Activated T-helper 1 cell treated with anti-CD3 and anti-CD28 coated beads, Interleukin-12 subunit alpha, Interleukin-12 subunit beta, Interleukin-2, Interleukin-4 antibody, amounts not matched to agents 30 ng/mL and 10 ng/mL and 1 ng/mL, durations not matched to agents 14 hours and 24 hours and 36 hours (primary cell): ENCODE measurements at regions of chr4 and their contacts with region 1.

Region 1: GRCh38 chr4:70901984-70902576 is at the start of gene MOB1B:
- DNase-seq: peak; percentile 81
- H3K4me3 Mint-ChIP-seq: peak within 1 kb of the TSS; percentile 98
- H3K27ac Mint-ChIP-seq: peak within 1 kb of the TSS; percentile 93
- H3K4me1 Mint-ChIP-seq: peaks cover 25% of the 10 kb centered on the region
- H3K27me3 Mint-ChIP-seq: no peaks in the 10 kb centered on the region
- total RNA-seq, gene MOB1B: 22.1 and 23.1 TPM in 2 replicates

Region 2: DNA sequence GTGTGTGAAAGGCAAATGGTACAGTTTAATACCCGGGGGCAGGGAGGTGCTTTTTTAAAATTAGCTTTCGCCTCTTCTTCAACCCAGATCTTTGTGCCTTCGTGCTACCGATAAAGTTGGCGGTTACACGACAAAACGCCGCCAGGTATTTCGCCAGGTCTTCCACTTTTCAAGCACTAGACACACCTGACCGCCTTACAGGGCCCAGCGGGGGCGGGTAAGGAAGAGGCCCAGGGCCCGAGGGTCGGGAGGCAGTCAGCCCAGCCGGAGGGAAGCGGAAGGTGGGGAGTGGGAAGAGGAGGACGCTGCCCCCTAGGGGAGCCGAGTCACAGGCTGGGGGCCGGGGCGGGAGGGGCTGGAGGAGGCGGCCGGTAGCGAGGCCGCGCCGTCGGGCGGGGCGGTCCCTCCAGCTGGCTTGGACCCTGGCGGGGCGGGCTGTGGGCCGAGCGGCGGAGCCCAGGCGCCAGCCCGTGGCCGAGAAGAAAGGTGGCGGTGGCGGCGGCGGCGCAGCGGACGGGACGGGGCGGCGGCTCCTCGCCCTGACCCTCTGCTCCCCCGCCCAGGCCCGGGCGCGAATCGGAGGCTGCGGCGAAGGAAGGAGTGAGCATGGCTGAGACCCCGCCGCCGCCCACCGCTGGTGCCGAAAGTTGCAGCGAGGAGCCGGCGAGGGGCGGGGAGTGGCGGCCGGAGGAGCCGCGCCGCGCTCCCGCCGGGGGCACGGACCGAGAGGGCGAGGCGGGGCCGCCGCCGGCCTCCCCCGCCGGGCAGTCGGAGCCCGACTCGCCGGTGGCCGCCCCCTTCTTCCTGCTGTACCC is 197.5 kb before region 1 on chr4:
- intact Hi-C with region 1: loop called (anchors 1 kb)
- DNase-seq: peak; percentile 38
- H3K4me3 Mint-ChIP-seq: peak overlapping the region; percentile 76
- H3K27ac Mint-ChIP-seq: peak overlapping the region; percentile 83
- H3K4me1 Mint-ChIP-seq: peaks cover 24% of the 10 kb centered on the region
- H3K27me3 Mint-ChIP-seq: peaks cover 3% of the 10 kb centered on the region

Region 3: GRCh38 chr4:70818173-70818855 is 83.8 kb before region 1 on chr4:
- intact Hi-C with region 1: loop called (anchors 5 kb)
- DNase-seq: no peak
- H3K4me3 Mint-ChIP-seq: no peak overlapping the region
- H3K27ac Mint-ChIP-seq: no peak overlapping the region
- H3K4me1 Mint-ChIP-seq: peaks cover 8% of the 10 kb centered on the region
- H3K27me3 Mint-ChIP-seq: no peaks in the 10 kb centered on the region

Region 4: DNA sequence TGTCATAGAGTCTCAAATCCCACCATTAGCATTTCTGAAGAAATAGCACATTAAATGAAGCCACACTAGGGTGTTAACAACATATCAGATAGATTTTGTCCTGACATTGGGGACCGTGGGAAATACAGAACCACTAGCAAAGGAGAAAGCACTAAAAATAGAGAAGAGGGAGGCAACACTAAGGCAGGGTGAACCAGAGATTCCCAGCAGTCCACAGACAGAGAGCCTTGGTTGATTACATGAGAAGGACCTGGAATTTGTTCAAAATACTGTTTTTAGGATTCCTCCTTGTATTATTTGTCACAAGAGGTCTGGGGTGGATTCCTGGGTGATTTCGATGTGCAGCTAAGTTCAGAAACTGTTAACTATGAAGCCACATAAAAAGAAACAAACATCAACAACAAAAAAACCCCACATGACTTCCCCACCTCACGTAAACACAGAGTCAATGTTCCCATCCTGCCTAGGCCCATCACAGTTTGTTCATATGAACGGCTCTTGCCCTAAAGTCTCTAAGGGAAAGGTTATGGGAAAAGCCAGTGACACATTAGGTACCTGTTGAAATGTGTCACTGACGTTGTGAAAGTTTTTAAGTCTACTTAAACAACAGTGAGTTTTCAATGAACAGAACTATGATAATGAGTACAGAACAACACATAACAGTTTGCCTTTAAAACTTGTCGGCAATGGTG is 38.8 kb before region 1 on chr4:
- intact Hi-C with region 1: loop called (anchors 1 kb)
- DNase-seq: peak; percentile 21
- H3K4me3 Mint-ChIP-seq: peak overlapping the region; percentile 15
- H3K27ac Mint-ChIP-seq: peak overlapping the region; percentile 82
- H3K4me1 Mint-ChIP-seq: peaks cover 15% of the 10 kb centered on the region
- H3K27me3 Mint-ChIP-seq: peaks cover under 1% of the 10 kb centered on the region

Region 5: DNA sequence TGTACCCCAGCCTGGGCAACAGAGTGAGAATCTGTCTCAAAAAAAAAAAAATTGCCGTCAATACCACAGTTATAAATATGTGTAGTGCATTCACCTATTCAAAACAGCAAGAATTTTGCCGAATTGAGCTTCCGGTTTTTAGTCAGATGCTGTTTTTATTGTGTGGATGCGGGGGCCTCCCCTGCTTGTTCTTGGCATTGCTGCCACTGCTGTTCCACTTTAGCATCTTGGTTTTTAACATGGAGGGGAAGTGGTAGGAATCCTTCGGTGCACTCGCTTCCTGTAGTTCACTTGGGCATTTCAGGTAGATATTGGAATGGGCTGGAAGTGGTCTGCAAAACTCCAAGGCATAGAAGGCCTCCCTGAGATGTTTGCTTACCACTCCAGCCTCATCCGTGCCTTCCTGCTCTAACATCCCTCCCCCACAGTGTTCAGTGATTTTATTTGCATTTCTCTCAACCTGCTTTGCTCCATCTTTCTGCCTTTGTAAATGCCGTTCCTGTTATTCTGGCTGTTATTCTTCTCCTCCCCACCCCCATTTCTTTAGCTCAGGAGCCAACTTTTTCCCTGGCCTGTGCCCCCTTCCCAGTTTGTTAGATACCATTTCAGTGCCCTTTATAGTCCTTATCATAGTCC is 25.5 kb after region 1 on chr4:
- intact Hi-C with region 1: loop called (anchors 1 kb)
- DNase-seq: peak; percentile 15
- H3K4me3 Mint-ChIP-seq: peak overlapping the region; percentile 11
- H3K27ac Mint-ChIP-seq: peak overlapping the region; percentile 76
- H3K4me1 Mint-ChIP-seq: peaks cover 31% of the 10 kb centered on the region
- H3K27me3 Mint-ChIP-seq: no peaks in the 10 kb centered on the region

Region 6: GRCh38 chr4:70943114-70943513 is 41.0 kb after region 1 on chr4:
- intact Hi-C with region 1: no loop called
- DNase-seq: no peak
- H3K4me3 Mint-ChIP-seq: no peak overlapping the region
- H3K27ac Mint-ChIP-seq: no peak overlapping the region
- H3K4me1 Mint-ChIP-seq: peaks cover 9% of the 10 kb centered on the region
- H3K27me3 Mint-ChIP-seq: no peaks in the 10 kb centered on the region

Region 7: DNA sequence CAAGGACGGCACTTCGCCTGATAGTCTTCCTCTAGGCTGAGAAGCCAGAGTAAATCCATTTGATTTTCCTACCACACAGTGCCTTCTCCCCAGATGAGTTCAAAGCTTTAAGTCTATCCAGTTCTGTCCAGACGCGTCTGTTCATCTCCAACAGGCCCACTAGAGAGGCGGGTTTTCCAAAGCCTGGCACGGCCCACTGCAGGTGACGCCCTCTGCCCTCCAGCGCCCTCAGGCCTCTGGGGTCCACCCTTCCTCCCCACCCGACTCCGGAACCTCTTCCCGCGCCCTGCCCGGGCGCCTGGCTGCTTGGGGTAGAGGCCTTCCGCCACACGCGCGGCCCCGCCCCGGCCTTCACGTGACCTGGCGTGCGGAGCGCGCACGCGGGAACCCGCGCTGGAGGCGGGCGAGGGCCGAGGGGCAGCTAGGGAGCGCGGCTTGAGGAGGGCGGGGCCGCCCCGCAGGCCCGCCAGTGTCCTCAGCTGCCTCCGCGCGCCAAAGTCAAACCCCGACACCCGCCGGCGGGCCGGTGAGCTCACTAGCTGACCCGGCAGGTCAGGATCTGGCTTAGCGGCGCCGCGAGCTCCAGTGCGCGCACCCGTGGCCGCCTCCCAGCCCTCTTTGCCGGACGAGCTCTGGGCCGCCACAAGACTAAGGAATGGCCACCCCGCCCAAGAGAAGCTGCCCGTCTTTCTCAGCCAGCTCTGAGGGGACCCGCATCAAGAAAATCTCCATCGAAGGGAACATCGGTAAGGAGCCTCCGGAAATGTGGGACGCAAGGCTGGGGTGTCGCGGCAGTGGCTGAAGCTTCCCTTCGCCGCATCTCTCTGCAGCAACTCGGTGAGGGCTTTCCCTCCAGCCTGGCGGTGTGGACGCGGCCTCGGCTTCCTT is 91.3 kb after region 1 on chr4 and contains the start of gene DCK:
- intact Hi-C with region 1: loop called (anchors 1 kb)
- DNase-seq: peak; percentile 85
- H3K4me3 Mint-ChIP-seq: peak within 1 kb of the TSS; percentile 97
- H3K27ac Mint-ChIP-seq: peak within 1 kb of the TSS; percentile 83
- H3K4me1 Mint-ChIP-seq: peaks cover 53% of the 10 kb centered on the region
- H3K27me3 Mint-ChIP-seq: no peaks in the 10 kb centered on the region
- total RNA-seq, gene DCK: 35.6 and 37.3 TPM in 2 replicates

Region 8: DNA sequence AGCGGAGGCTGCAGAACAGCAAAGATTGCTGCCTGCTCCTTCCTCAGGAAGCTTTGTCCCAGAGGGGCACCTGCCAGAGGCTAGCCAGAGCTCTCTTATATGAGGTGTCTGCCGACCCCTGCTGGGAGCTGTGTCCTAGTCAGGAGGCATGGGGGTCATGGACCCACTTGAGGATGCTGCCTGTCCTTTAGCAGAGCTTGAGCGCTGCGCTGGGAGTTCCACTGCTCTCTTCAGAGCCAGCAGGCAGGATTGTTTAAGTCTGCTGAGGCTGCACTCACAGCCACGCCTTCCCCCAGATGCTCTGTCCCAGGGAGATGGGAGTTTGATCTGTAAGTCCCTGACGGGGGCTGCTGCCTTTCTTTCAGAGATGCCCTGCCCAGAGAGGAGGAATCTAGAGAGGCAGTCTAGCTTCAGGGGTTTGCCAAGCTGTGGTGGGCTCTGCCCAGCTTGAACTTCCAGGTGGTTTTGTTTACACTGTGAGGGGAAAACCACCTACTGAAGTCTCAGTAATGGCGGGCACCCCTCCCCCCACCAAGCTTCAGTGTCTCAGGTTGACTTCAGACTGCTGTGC is 102.3 kb after region 1 on chr4:
- intact Hi-C with region 1: loop called (anchors 1 kb)
- DNase-seq: peak; percentile 54
- H3K4me3 Mint-ChIP-seq: peak overlapping the region; percentile 76
- H3K27ac Mint-ChIP-seq: peak overlapping the region; percentile 81
- H3K4me1 Mint-ChIP-seq: peaks cover 90% of the 10 kb centered on the region
- H3K27me3 Mint-ChIP-seq: no peaks in the 10 kb centered on the region